PC-3 (cell line): ENCODE measurements at regions of chr6 and their contacts with region 1.

Region 1: GRCh38 chr6:159862103-159862502 is 28.7 kb upstream of the MAS1 start:
- DNase-seq: no peak
- ATAC-seq: no peak
- H3K4me3 ChIP-seq: no peak overlapping the region
- H3K27ac ChIP-seq: no peak overlapping the region
- H3K4me1 ChIP-seq: no peaks in the 10 kb centered on the region
- H3K27me3 ChIP-seq: no peaks in the 10 kb centered on the region
- CTCF ChIP-seq: no peak

Region 2: GRCh38 chr6:159886270-159886669 is 24.2 kb after region 1 on chr6:
- CTCF ChIA-PET with region 1: interaction called, 10 read pairs
- POLR2A ChIA-PET with region 1: no interaction called
- intact Hi-C with region 1: no loop called
- DNase-seq: no peak
- ATAC-seq: no peak
- H3K4me3 ChIP-seq: no peak overlapping the region
- H3K27ac ChIP-seq: no peak overlapping the region
- H3K4me1 ChIP-seq: no peaks in the 10 kb centered on the region
- H3K27me3 ChIP-seq: peaks cover 33% of the 10 kb centered on the region
- CTCF ChIP-seq: no peak

Region 3: GRCh38 chr6:159941286-159942113 is 79.4 kb after region 1 on chr6:
- CTCF ChIA-PET with region 1: interaction called, 4 read pairs
- POLR2A ChIA-PET with region 1: no interaction called
- intact Hi-C with region 1: loop called (anchors 1 kb)
- DNase-seq: peak; percentile 57
- ATAC-seq: peak; percentile 77
- H3K4me3 ChIP-seq: no peak overlapping the region
- H3K27ac ChIP-seq: no peak overlapping the region
- H3K4me1 ChIP-seq: no peaks in the 10 kb centered on the region
- H3K27me3 ChIP-seq: no peaks in the 10 kb centered on the region
- CTCF ChIP-seq: peak; percentile 67